CD8-positive, alpha-beta memory T cell (primary cell): ENCODE measurements at regions of chr17 and their contacts with region 1.

Region 1: DNA sequence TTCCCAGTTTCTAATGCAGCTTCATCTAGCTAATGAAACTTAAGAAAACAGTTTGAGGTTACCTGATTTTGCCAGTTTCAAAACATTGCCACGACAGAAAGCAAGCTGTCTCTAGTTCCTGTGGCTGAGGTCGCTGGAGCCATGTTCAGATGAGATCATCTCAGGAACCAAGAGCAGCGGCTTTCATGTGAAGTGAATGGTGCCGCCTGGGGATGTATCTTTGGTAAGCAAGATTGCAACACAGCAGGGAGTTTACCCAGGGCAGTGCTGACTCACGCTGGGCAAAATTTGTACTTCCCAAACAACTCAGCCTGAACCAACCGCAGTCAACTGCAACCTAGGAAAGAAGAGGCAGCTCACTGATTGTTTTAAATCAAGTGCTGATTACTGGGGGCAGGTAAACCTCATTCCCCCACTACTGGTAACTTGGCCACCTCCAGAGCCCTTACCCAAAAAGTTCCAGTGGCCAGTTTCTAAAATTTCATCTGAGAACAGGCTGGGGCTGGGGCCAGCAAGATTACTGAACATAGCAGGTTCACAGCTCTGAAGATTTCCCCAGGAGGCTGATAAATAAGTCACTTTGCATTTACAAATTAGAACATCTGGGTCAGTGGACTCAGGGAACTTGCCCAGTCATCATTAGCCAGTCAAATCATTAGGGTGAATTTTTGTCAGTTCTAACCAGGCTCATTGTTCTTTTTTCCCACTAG is at the start of gene RFFL:
- DNase-seq: peak; percentile 75 to 93 (median 80)
- H3K4me3 ChIP-seq: peak within 1 kb of the TSS; percentile 38
- H3K4me3 Mint-ChIP-seq: peak within 1 kb of the TSS; percentile 72 to 92 (median 80)
- H3K27ac ChIP-seq: peak within 1 kb of the TSS; percentile 57
- H3K27ac Mint-ChIP-seq: peak within 1 kb of the TSS; percentile 88 to 97 (median 94)
- H3K4me1 ChIP-seq: peaks cover 41% of the 10 kb centered on the region
- H3K4me1 Mint-ChIP-seq: peaks cover 46 to 77% (median 73%) of the 10 kb centered on the region in 3 donors
- H3K27me3 ChIP-seq: no peaks in the 10 kb centered on the region
- H3K27me3 Mint-ChIP-seq: no peaks in the 10 kb centered on the region
- total RNA-seq, gene RFFL: 30.2 to 33.1 TPM

Region 2: GRCh38 chr17:35022536-35023063 is 41.1 kb before region 1 on chr17:
- CTCF ChIA-PET with region 1: interaction called, 34 read pairs
- POLR2A ChIA-PET with region 1: interaction called, 30 read pairs
- DNase-seq: peak; percentile 60 to 80 (median 62)
- H3K4me3 ChIP-seq: peak overlapping the region; percentile 36
- H3K4me3 Mint-ChIP-seq: peak overlapping the region in 6 of 7 donors; percentile 29 to 87 (median 74)
- H3K27ac ChIP-seq: peak overlapping the region; percentile 62
- H3K27ac Mint-ChIP-seq: peak overlapping the region; percentile 95 to 99 (median 98)
- H3K4me1 ChIP-seq: peaks cover 35% of the 10 kb centered on the region
- H3K4me1 Mint-ChIP-seq: peaks cover 46 to 74% (median 71%) of the 10 kb centered on the region in 3 donors
- H3K27me3 ChIP-seq: no peaks in the 10 kb centered on the region
- H3K27me3 Mint-ChIP-seq: no peaks in the 10 kb centered on the region

Region 3: DNA sequence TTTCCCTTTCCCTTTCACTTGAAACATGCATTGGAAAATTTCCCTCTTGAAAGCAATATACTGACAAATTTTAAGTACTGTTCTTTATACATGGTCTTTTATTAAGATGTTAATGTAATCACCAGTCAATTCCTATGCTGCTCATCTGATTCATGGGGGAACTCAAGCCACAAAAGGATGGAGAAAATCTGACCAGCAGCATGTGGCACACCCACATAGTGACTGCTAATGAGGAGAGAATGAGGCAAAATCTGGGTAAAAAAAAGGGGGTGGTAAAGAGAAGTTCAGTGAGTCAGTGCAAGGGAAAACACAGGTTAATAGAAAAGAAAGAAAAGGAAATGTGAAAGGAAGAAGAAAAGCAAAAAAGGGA is 11.4 kb before region 1 on chr17:
- CTCF ChIA-PET with region 1: interaction called, 17 read pairs
- POLR2A ChIA-PET with region 1: interaction called, 10 read pairs
- DNase-seq: no peak
- H3K4me3 ChIP-seq: peak overlapping the region; percentile 56
- H3K4me3 Mint-ChIP-seq: peak overlapping the region; percentile 5 to 76 (median 66)
- H3K27ac ChIP-seq: peak overlapping the region; percentile 49
- H3K27ac Mint-ChIP-seq: peak overlapping the region; percentile 89 to 99 (median 94)
- H3K4me1 ChIP-seq: peaks cover 74% of the 10 kb centered on the region
- H3K4me1 Mint-ChIP-seq: peaks cover 59 to 80% (median 78%) of the 10 kb centered on the region in 3 donors
- H3K27me3 ChIP-seq: no peaks in the 10 kb centered on the region
- H3K27me3 Mint-ChIP-seq: peaks cover 0 to 3% of the 10 kb centered on the region in 2 donors

Region 4: DNA sequence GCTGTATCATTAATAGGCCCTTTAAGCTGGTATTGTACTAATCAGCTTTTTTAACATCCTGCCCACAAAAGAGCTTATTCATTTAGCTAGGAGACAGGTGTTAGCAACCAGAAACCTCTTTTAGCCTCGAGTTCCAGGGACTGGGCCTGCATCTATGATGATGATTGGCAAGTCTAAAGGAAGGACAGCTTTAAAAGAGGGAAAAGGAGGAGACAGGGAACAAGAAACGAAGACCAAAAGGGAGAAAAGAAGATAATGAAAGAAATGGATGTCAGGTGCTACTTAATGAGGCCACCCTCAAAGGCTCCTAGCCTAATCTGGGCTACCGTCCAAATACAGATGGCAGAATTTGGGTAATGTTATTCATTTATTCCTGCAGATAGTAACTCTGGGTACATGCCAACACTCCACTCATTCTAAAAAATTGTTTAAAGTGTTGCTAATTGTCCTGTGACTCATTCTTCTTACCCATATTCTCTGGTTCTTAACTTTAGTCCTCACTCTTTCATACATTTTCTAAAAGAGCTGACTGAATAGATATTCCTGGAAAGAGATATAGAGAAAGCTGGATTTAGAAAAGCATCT is 18.5 kb after region 1 on chr17:
- CTCF ChIA-PET with region 1: interaction called, 14 read pairs
- POLR2A ChIA-PET with region 1: interaction called, 11 read pairs
- DNase-seq: no peak
- H3K4me3 ChIP-seq: no peak overlapping the region
- H3K4me3 Mint-ChIP-seq: peak overlapping the region in 6 of 7 donors; percentile 43 to 81 (median 56)
- H3K27ac ChIP-seq: no peak overlapping the region
- H3K27ac Mint-ChIP-seq: peak overlapping the region; percentile 40 to 98 (median 92)
- H3K4me1 ChIP-seq: peaks cover 50% of the 10 kb centered on the region
- H3K4me1 Mint-ChIP-seq: peaks cover 69 to 84% (median 79%) of the 10 kb centered on the region in 3 donors
- H3K27me3 ChIP-seq: no peaks in the 10 kb centered on the region
- H3K27me3 Mint-ChIP-seq: no peaks in the 10 kb centered on the region

Region 5: GRCh38 chr17:35135322-35135721 is 71.7 kb after region 1 on chr17:
- CTCF ChIA-PET with region 1: no interaction called
- POLR2A ChIA-PET with region 1: no interaction called
- DNase-seq: no peak
- H3K4me3 ChIP-seq: no peak overlapping the region
- H3K4me3 Mint-ChIP-seq: no peak overlapping the region
- H3K27ac ChIP-seq: no peak overlapping the region
- H3K27ac Mint-ChIP-seq: no peak overlapping the region
- H3K4me1 ChIP-seq: no peaks in the 10 kb centered on the region
- H3K4me1 Mint-ChIP-seq: peaks cover 0 to 6% (median 0%) of the 10 kb centered on the region in 3 donors
- H3K27me3 ChIP-seq: no peaks in the 10 kb centered on the region
- H3K27me3 Mint-ChIP-seq: no peaks in the 10 kb centered on the region